OCI-LY7 (cell line): ENCODE measurements at regions of chr2 and their contacts with region 1.

Region 1: DNA sequence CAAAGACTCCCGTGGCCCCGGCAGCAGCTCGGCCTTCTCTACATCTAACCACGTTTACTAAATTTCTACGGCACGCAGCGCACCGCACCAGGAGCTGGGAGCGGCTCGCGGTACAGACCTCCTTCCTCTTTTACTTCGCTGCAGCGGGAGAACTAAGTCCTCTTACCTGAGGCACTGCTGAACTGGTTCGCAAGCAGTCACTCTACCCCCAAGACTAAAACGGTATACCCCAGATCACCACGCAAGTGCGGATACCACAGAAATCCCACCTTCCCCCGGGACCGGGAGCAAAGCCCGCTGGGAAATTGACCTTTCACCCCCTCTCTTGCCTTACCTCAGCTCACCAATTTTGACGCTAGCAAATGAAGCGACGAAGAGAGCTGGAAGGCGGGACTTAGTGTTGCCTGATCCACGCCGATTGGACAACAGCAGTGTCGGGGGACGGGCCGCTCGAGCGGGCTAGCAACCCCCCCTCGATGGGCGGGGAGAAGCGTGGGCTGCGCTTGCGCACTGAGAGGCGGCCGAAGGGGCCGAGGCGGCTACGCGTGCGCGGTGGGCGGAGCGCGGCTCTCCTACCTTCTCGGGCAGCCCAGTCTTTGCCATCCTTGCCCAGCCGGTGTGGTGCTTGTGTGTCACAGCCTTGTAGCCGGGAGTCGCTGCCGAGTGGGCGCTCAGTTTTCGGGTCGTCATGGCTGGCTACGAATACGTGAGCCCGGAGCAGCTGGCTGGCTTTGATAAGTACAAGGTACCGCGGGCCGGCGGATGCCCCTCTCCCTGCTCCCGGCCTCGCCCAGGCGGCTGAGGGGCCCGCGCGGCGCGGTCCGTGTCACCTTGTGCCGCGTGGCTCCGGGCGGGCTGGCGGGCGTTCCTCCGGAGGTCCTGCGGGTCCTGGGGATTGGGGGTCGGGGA is at the start of gene SELENOI:
- DNase-seq: peak; percentile 99
- H3K4me3 ChIP-seq: peak within 1 kb of the TSS; percentile 83
- H3K27ac ChIP-seq: peak within 1 kb of the TSS; percentile 77
- H3K4me1 ChIP-seq: peaks cover 28% of the 10 kb centered on the region
- CTCF ChIP-seq: no peak
- total RNA-seq, gene SELENOI: 29.0 TPM in 2 replicates

Region 2: DNA sequence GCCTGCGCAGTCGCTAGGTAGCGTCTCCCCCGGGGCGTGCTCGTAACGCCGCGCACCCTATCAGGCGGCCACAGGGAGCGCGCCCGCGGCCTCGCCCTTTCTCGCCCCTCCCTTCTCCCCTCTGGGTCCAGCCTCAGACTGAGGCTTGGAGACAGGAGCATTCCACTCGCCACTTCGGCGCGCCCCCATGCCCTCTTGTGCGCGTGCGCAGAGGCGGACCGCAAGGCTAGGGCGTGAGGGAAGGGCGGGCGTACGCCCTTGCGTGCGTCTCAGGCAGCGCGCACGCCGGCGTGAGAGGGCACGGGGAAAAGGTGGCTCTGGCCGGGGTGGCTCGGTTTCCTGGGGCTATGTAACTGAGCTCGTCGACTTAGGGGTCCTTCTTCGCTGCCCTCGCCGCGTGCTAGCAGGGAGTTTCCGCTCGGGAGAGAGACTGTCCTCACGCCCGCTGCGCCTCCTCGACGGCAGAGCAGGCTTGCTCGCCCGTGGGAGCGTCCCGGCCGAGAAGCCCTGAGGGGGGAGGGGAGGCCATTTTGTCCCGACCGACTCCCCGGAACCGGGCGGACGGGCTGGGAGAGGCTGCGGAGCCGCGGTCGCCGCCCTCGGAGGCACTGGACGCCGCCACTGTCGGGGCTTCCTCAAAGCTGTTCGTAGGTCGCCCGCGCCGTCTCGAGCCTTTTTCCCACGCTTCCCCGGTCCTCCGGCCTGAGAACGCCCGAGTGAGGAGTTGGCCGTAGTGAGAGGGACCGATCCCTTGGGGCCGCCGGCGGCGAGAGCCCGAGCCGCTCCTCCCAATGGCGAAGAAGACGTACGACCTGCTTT is 311.8 kb before region 1 on chr2 and contains the start of gene RAB10:
- CTCF ChIA-PET with region 1: no interaction called
- POLR2A ChIA-PET with region 1: interaction called, 5 read pairs
- intact Hi-C with region 1: loop called (anchors 5 kb)
- DNase-seq: peak; percentile 99
- H3K4me3 ChIP-seq: peak within 1 kb of the TSS; percentile 95
- H3K27ac ChIP-seq: peak within 1 kb of the TSS; percentile 85
- H3K4me1 ChIP-seq: peaks cover 27% of the 10 kb centered on the region
- CTCF ChIP-seq: no peak
- total RNA-seq, gene RAB10: 58.3 and 109 TPM in 2 replicates

Region 3: DNA sequence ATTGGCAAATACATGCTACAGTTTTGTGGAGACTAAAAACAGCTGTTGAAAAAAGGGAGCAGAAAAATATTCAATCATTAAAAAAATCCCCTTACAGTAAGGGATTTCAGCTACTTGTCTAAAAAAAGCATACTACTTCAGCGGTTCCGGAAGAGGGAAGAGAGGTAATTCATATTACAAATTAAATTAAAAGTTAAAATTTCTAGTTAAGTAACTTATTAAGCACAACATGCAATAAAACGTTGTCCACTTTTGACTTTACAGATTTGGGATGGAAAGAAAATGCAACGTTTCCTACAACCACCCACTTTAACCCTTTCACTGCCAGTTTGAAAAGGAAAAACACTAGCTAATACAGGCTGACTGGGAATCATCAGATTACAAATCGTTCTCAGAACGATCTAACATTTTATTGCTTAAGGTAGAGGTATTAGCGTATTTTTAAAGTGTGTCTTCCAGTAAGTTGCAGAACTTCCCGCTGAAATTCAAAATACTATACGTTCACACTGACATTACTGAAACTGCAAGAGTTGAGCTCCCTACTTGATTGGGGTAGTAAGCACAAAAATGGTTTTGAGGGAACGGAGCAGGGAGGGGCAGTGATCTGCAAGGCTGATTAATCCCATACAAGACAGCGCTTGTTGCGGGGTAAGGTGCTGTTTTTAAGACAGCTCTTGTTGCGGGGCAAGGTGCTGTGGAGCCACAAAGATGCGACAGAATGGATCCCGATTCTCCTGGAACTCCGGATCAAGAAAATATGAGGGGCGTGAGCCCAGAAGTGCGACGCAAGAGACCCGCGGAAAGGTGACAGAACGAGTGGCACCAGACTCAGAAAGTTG is 102.1 kb before region 1 on chr2:
- CTCF ChIA-PET with region 1: no interaction called
- POLR2A ChIA-PET with region 1: interaction called, 6 read pairs
- intact Hi-C with region 1: loop called (anchors 2 kb)
- DNase-seq: peak; percentile 47
- H3K4me3 ChIP-seq: peak overlapping the region; percentile 93
- H3K27ac ChIP-seq: peak overlapping the region; percentile 72
- H3K4me1 ChIP-seq: peaks cover 40% of the 10 kb centered on the region
- CTCF ChIP-seq: no peak

Region 4: GRCh38 chr2:26396734-26397298 is 51.0 kb after region 1 on chr2:
- CTCF ChIA-PET with region 1: no interaction called
- POLR2A ChIA-PET with region 1: no interaction called
- intact Hi-C with region 1: no loop called
- DNase-seq: no peak
- H3K4me3 ChIP-seq: no peak overlapping the region
- H3K27ac ChIP-seq: no peak overlapping the region
- H3K4me1 ChIP-seq: no peaks in the 10 kb centered on the region
- CTCF ChIP-seq: no peak

Region 5: GRCh38 chr2:26605195-26605998 is 259.6 kb after region 1 on chr2:
- CTCF ChIA-PET with region 1: no interaction called
- POLR2A ChIA-PET with region 1: no interaction called
- intact Hi-C with region 1: no loop called
- DNase-seq: peak; percentile 63
- H3K4me3 ChIP-seq: no peak overlapping the region
- H3K27ac ChIP-seq: no peak overlapping the region
- H3K4me1 ChIP-seq: peaks cover 7% of the 10 kb centered on the region
- CTCF ChIP-seq: peak; percentile 93